Mammary epithelial cell (primary cell): ENCODE measurements at regions of chr5 and their contacts with region 1.

Region 1: DNA sequence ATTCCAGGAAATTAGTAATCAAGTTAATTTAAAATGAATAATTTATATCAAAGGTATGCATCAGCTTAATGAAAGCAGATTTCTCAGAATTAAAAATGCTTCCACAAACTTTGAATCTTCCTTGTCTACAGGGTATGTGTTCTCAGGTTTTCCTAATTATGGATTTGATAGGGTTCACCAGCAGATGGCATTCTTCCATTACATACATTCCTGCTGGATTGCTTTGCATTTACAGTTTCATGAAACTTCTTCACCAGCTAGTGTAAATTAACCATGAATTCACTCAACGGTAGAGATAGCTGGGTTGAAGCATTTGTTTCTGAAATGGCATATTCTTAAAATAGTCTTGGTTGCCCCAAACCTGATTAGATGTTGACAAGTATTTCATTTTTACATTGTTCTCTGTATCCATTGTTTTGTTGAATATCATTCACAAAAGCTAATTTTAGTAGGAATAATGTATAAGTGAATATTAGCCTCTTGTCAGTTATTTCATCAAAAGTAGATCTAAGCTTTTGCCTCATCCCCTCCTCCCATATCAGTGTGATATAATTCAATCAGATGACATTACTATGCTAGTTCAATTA is 68.7 kb upstream of the WDR41 start:
- DNase-seq: peak; percentile 34
- H3K4me3 ChIP-seq: no peak overlapping the region
- H3K27ac ChIP-seq: no peak overlapping the region
- H3K4me1 ChIP-seq: no peaks in the 10 kb centered on the region
- H3K27me3 ChIP-seq: peaks cover 4% of the 10 kb centered on the region
- CTCF ChIP-seq: peak; percentile 48 to 66

Region 2: DNA sequence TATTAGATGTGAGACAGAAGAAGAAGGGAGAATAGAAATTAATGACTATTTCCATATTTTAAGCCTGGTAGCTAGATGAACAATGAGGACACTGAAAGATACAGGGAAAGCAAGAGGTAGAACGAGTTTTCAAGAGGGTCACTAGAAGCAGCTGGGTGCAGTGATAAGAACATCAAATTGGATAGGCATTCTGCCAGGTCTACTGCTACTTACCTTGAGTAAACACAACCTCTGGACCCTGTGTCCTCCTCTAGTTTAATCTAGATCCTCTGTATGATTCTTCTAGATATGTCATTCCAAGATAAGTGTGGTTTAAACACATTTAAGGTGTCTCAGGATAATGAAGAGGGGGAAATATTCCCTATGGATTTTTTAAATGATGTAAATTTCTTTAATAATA is 46.6 kb after region 1 on chr5:
- CTCF ChIA-PET with region 1: no interaction called
- dilution Hi-C with region 1: no loop called
- in situ Hi-C with region 1: no loop called
- intact Hi-C with region 1: no loop called
- DNase-seq: no peak
- H3K4me3 ChIP-seq: no peak overlapping the region
- H3K27ac ChIP-seq: no peak overlapping the region
- H3K4me1 ChIP-seq: no peaks in the 10 kb centered on the region
- H3K27me3 ChIP-seq: peaks cover 2% of the 10 kb centered on the region
- CTCF ChIP-seq: no peak

Region 3: GRCh38 chr5:77867194-77867691 is 306.5 kb after region 1 on chr5:
- CTCF ChIA-PET with region 1: no interaction called
- dilution Hi-C with region 1: no loop called
- in situ Hi-C with region 1: no loop called
- intact Hi-C with region 1: loop called (anchors 5 kb)
- DNase-seq: no peak
- H3K4me3 ChIP-seq: no peak overlapping the region
- H3K27ac ChIP-seq: no peak overlapping the region
- H3K4me1 ChIP-seq: no peaks in the 10 kb centered on the region
- H3K27me3 ChIP-seq: no peaks in the 10 kb centered on the region
- CTCF ChIP-seq: peak in 1 of 2 donors; percentile 17

Region 4: DNA sequence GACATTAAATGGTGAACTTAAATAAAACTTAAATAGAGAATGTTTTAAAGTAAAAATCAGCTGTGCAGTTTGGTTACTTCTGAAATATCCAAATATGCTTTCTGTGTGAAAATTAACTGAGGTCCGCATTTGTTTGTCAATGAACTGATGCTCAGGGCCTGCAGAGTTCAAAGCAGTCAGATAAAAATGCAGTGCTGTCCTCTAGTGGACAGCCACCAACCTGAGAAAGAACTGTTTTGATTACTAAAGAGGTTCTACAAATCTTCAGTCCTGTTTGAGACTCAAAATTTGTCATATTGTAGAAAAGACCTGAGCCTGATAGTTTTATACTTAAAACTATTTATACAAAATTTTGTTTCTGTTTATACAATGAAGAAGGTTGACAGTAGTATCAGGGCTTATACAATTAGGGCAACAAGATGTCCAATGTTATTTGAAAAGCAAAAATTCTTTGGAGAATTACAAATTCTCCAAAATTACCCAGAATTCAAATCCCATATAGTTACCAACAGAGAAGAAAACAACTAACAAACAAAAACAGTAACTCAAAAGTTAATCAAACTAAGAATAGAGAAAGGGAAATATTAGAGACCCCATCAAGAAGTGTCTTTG is 447.7 kb after region 1 on chr5:
- CTCF ChIA-PET with region 1: no interaction called
- dilution Hi-C with region 1: no loop called
- in situ Hi-C with region 1: loop called in 1 of 2 experiments (anchors 25 kb)
- intact Hi-C with region 1: loop called (anchors 1 kb)
- DNase-seq: peak; percentile 19
- H3K4me3 ChIP-seq: no peak overlapping the region
- H3K27ac ChIP-seq: no peak overlapping the region
- H3K4me1 ChIP-seq: no peaks in the 10 kb centered on the region
- H3K27me3 ChIP-seq: no peaks in the 10 kb centered on the region
- CTCF ChIP-seq: peak; percentile 88 to 93

Region 5: DNA sequence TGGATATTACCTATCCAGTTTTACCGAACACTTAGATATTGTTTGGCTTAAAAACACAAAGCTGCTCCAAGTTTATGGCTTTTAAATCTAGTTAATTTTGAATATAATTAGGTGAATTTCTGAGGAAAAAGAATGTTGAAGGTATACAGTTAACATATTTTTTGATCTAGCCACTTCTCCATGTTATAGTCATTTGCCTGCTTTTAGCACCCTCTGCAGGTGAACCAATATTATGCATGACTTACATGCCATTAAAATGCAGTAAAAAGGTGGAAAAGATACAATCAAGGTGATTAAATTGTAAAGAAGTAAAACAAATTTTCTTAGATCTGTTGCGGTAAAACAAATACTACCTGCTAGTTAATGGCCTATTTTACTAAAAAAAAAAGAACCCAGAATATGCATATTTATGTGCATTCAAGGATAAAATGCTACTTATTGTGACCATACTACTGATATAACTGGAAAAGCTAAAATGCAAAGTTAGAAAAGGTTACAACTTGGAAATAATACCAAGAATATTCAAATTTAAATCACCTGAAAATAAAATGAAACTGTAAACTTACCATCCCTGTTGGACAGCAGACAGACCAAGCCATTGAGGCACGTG is 601.6 kb after region 1 on chr5:
- CTCF ChIA-PET with region 1: no interaction called
- dilution Hi-C with region 1: no loop called
- in situ Hi-C with region 1: no loop called
- intact Hi-C with region 1: loop called (anchors 5 kb)
- DNase-seq: no peak
- H3K4me3 ChIP-seq: no peak overlapping the region
- H3K27ac ChIP-seq: no peak overlapping the region
- H3K4me1 ChIP-seq: no peaks in the 10 kb centered on the region
- H3K27me3 ChIP-seq: no peaks in the 10 kb centered on the region
- CTCF ChIP-seq: peak; percentile 52 to 59

Region 6: DNA sequence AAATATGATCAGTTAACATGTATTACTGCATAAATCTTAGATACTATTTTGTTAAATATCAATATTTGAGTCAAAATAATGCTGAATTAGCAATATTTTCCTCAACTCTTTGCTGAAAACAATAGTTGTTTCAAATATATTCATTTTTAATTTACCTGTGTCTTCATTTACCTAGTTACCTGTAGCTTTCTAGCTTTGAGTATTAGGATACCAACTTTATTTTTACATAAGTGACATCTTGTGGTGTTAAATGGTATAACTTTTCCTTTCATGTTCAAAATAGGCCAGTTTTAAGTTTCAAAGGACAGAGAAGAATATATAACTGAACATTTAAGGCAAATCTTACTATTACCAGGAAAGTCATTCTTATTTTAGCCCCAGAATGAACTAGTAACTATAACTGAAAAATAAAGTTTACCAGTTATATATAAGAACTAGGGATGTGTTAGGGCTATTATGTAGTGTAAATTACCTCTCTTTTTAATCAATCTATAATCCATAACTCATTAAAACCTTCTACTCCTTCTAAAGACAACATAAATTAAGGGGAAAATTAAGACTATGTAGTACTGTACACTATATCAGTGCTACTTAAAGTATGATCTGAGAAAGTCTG is 708.4 kb after region 1 on chr5:
- CTCF ChIA-PET with region 1: no interaction called
- dilution Hi-C with region 1: no loop called
- in situ Hi-C with region 1: no loop called
- intact Hi-C with region 1: loop called (anchors 10 kb)
- DNase-seq: no peak
- H3K4me3 ChIP-seq: no peak overlapping the region
- H3K27ac ChIP-seq: no peak overlapping the region
- H3K4me1 ChIP-seq: no peaks in the 10 kb centered on the region
- H3K27me3 ChIP-seq: no peaks in the 10 kb centered on the region
- CTCF ChIP-seq: peak; percentile 41 to 45

Region 7: DNA sequence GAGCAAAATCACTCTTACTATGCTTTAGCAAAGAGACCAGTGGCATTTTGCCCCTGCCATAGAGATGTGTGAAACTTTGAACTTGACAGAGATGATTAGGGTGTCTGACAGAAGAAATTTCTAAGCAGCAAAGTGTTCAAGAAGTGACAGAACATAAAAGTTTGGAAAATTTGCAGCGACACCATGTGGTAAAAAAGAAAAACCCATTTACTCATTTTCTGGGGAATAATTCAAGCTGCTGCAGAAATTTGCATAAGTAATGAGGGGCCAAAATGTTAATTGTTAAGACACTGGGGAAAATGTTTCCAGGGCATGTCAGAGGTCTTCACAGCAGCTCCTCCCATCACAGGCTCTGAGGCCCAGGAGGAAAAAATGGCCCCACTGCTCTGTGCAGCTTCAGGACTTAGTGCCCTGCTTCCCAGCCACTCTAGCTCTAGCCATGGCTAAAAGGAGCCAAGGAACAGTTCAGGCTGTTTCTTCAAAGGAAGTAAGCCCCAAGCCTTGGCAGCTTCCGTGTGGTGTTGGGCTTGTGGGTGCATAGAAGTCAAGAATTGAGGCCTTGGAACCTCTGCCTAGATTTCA is 739.8 kb after region 1 on chr5:
- CTCF ChIA-PET with region 1: no interaction called
- dilution Hi-C with region 1: no loop called
- in situ Hi-C with region 1: no loop called
- intact Hi-C with region 1: loop called (anchors 1 kb)
- DNase-seq: no peak
- H3K4me3 ChIP-seq: no peak overlapping the region
- H3K27ac ChIP-seq: no peak overlapping the region
- H3K4me1 ChIP-seq: no peaks in the 10 kb centered on the region
- H3K27me3 ChIP-seq: no peaks in the 10 kb centered on the region
- CTCF ChIP-seq: peak in 1 of 2 donors; percentile 4

Region 8: DNA sequence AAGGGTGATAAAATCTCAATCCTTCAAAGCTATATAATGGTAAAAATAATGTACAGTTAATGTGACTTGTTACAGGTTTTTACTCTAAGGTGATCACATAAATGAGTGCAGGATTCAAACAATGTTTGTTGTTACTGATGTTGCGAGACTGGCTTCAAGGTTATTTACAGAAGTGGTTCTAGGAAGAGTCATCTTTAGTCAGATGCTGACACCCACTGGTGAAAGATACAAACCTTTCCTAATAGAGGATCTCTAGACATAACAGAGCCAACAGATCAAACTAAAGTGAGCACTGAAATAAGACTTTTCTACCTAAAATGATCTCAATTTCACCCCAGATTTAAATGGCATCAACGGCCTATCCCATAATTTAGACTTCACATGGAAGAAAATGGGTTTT is 1404.1 kb after region 1 on chr5:
- CTCF ChIA-PET with region 1: no interaction called
- dilution Hi-C with region 1: no loop called
- in situ Hi-C with region 1: no loop called
- intact Hi-C with region 1: loop called (anchors 5 kb)
- DNase-seq: peak; percentile 45
- H3K4me3 ChIP-seq: no peak overlapping the region
- H3K27ac ChIP-seq: no peak overlapping the region
- H3K4me1 ChIP-seq: no peaks in the 10 kb centered on the region
- H3K27me3 ChIP-seq: no peaks in the 10 kb centered on the region
- CTCF ChIP-seq: peak; percentile 18 to 61